B cell (primary cell): ENCODE measurements at regions of chr7 and their contacts with region 1.

Region 1: GRCh38 chr7:98168181-98168905 is 42.9 kb upstream of the BHLHA15 start:
- DNase-seq: peak; percentile 83
- ATAC-seq: peak; percentile 75
- H3K4me3 ChIP-seq: no peak overlapping the region
- H3K4me3 Mint-ChIP-seq: no peak overlapping the region
- H3K27ac ChIP-seq: no peak overlapping the region
- H3K27ac Mint-ChIP-seq: no peak overlapping the region
- H3K4me1 ChIP-seq: peaks cover 0 to 6% of the 10 kb centered on the region in 2 donors
- H3K4me1 Mint-ChIP-seq: peaks cover 14% of the 10 kb centered on the region
- H3K27me3 ChIP-seq: peaks cover 0 to 4% (median 0%) of the 10 kb centered on the region in 4 experiments
- H3K27me3 Mint-ChIP-seq: peaks cover 4% of the 10 kb centered on the region
- CTCF ChIP-seq: peak; percentile 95

Region 2: DNA sequence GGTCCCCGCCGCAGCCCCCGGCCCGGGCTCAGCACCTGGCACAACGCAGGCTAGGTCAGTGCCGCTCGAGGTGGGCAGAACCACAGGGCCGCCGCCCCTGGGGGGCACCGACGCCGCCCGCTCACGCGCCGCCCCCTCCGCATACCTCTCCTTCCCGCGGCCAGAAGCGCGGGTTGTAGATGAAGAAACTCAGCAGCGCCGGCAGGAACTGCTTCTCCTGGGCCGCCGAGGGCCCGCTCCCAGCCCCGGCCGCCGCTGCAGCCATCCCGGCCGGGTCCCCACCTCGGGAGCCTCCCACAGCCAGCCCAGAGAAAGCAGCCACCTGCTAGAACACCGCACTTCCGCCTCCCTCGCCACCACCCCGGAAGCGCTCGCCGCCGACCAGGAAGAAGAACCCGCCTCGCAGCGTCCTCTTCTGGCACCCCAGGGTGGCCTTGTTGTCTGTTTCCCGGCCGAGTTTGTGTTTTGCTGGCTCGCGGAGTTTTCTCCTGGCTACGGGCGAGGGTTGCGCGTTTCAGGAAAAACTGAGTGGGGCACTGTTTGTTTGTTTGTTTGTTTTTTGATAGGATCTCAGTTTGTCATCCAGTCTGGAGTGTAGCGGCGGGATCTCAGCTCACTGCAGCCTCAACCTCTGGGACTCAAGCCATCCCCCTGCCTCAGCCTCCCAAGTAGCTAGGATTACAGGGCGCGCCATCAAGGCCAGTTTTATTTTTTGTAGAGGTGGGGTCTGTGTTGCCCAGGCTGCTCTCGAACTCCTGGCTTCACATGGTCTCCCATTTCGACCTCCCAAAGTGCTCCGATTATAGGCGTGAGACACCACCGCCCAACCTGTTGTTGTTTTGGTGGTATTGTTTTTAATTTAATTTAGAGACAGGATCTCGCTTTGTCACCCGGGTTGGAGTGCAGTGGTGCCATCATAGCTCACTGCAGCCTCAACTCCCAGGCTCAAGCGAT is 196.1 kb before region 1 on chr7:
- CTCF ChIA-PET with region 1: interaction called, 5 read pairs
- POLR2A ChIA-PET with region 1: no interaction called
- intact Hi-C with region 1: loop called (anchors 1 kb)
- DNase-seq: peak; percentile 86
- ATAC-seq: peak; percentile 92
- H3K4me3 ChIP-seq: peak overlapping the region; percentile 67 to 94 (median 88)
- H3K4me3 Mint-ChIP-seq: peak overlapping the region; percentile 97
- H3K27ac ChIP-seq: peak overlapping the region; percentile 26 to 88
- H3K27ac Mint-ChIP-seq: peak overlapping the region; percentile 89
- H3K4me1 ChIP-seq: peaks cover 11 to 14% of the 10 kb centered on the region in 2 donors
- H3K4me1 Mint-ChIP-seq: peaks cover 14% of the 10 kb centered on the region
- H3K27me3 ChIP-seq: no peaks in the 10 kb centered on the region
- H3K27me3 Mint-ChIP-seq: peaks cover 5% of the 10 kb centered on the region
- CTCF ChIP-seq: no peak

Region 3: DNA sequence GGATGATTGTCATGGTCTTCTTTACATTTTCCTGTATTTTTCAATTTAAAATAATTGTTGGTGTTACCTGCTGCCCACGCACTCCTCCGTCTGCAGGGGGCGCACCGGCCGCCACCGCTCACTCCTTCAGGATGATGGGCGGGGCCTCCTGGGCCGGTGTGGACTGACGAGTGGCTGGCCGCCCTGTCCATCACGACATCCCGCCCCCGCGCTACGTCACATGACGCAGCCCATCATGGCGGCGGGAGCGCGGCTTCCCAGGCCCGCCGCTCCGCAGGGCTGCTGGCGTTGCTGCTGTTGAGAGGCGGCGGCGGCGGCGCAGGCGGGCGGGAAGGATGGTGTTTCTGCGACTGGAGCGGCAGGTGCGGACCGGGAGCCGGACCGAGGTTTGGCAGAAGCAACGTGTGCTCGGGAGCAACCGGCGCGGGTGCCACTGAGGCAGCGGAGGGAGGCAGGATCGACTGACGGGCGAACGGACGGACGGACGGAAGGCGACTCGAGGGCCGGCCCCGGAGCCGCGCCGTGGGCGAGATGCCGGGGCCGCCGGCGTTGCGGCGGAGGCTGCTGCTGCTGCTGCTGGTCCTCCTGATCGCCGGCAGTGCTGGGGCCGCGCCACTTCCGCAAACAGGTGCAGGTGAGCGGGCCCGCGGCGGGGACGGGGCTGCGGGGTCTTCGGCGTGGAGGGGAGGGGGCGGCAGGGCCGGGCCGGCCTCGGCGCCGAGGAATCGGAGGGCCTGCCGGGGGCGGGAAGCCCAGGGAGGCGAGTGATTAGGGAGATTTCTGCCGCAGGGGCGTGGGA is 61.5 kb before region 1 on chr7 and contains the start of gene LMTK2:
- CTCF ChIA-PET with region 1: interaction called, 130 read pairs
- POLR2A ChIA-PET with region 1: no interaction called
- intact Hi-C with region 1: loop called (anchors 1 kb)
- DNase-seq: peak; percentile 97
- ATAC-seq: peak; percentile 100
- H3K4me3 ChIP-seq: peak within 1 kb of the TSS; percentile 74 to 91 (median 84)
- H3K4me3 Mint-ChIP-seq: peak within 1 kb of the TSS; percentile 98
- H3K27ac ChIP-seq: peak within 1 kb of the TSS; percentile 47 to 77
- H3K27ac Mint-ChIP-seq: peak within 1 kb of the TSS; percentile 92
- H3K4me1 ChIP-seq: peaks cover 10 to 14% of the 10 kb centered on the region in 2 donors
- H3K4me1 Mint-ChIP-seq: peaks cover 24% of the 10 kb centered on the region
- H3K27me3 ChIP-seq: peaks cover 0 to 24% (median 14%) of the 10 kb centered on the region in 4 experiments
- H3K27me3 Mint-ChIP-seq: peaks cover 10% of the 10 kb centered on the region
- CTCF ChIP-seq: peak; percentile 91
- total RNA-seq, gene LMTK2: 13.1 and 16.7 TPM in 2 replicates

Region 4: GRCh38 chr7:98178347-98178746 is 10.0 kb after region 1 on chr7:
- CTCF ChIA-PET with region 1: interaction called, 37 read pairs
- POLR2A ChIA-PET with region 1: no interaction called
- intact Hi-C with region 1: no loop called
- DNase-seq: no peak
- ATAC-seq: no peak
- H3K4me3 ChIP-seq: no peak overlapping the region
- H3K4me3 Mint-ChIP-seq: no peak overlapping the region
- H3K27ac ChIP-seq: no peak overlapping the region
- H3K27ac Mint-ChIP-seq: no peak overlapping the region
- H3K4me1 ChIP-seq: no peaks in the 10 kb centered on the region
- H3K4me1 Mint-ChIP-seq: no peaks in the 10 kb centered on the region
- H3K27me3 ChIP-seq: no peaks in the 10 kb centered on the region
- H3K27me3 Mint-ChIP-seq: no peaks in the 10 kb centered on the region
- CTCF ChIP-seq: no peak

Region 5: GRCh38 chr7:98240961-98241674 is 72.8 kb after region 1 on chr7:
- CTCF ChIA-PET with region 1: no interaction called
- POLR2A ChIA-PET with region 1: no interaction called
- intact Hi-C with region 1: loop called (anchors 1 kb)
- DNase-seq: peak; percentile 46
- ATAC-seq: peak; percentile 57
- H3K4me3 ChIP-seq: no peak overlapping the region
- H3K4me3 Mint-ChIP-seq: no peak overlapping the region
- H3K27ac ChIP-seq: no peak overlapping the region
- H3K27ac Mint-ChIP-seq: no peak overlapping the region
- H3K4me1 ChIP-seq: no peaks in the 10 kb centered on the region
- H3K4me1 Mint-ChIP-seq: no peaks in the 10 kb centered on the region
- H3K27me3 ChIP-seq: no peaks in the 10 kb centered on the region
- H3K27me3 Mint-ChIP-seq: no peaks in the 10 kb centered on the region
- CTCF ChIP-seq: peak; percentile 67

Region 6: DNA sequence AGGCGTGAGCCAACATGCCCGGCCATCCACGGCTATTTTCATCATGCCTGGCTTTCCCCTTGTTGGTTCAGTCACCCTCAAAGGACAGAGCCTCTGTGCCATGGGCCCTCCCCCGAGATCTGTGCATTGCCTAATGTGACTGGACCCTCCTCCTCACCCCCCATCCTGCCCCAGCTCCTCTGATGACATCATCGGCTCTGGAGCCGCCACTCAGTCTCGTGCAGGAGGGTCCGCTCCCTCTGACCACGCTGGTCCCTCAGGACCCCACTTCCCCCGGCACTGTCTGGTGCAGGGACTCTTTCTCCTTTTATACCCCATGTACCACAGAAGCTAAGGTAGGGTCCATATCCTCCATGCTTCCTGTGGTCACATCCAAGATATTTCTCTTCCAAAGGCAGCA is 265.8 kb after region 1 on chr7:
- CTCF ChIA-PET with region 1: no interaction called
- POLR2A ChIA-PET with region 1: no interaction called
- intact Hi-C with region 1: no loop called
- DNase-seq: no peak
- ATAC-seq: no peak
- H3K4me3 ChIP-seq: no peak overlapping the region
- H3K4me3 Mint-ChIP-seq: no peak overlapping the region
- H3K27ac ChIP-seq: no peak overlapping the region
- H3K27ac Mint-ChIP-seq: no peak overlapping the region
- H3K4me1 ChIP-seq: peaks cover 0 to 5% of the 10 kb centered on the region in 2 donors
- H3K4me1 Mint-ChIP-seq: peaks cover 9% of the 10 kb centered on the region
- H3K27me3 ChIP-seq: no peaks in the 10 kb centered on the region
- H3K27me3 Mint-ChIP-seq: peaks cover 21% of the 10 kb centered on the region
- CTCF ChIP-seq: no peak